Aorta (tissue), 5 donors: ENCODE measurements at regions of chr18 and their contacts with region 1.

Region 1: GRCh38 chr18:59402432-59403090 is 43.5 kb upstream of the LMAN1 start:
- DNase-seq: peak; percentile 74 to 83
- ATAC-seq: peak; percentile 79
- H3K4me3 ChIP-seq: no peak overlapping the region
- H3K27ac ChIP-seq: no peak overlapping the region
- H3K4me1 ChIP-seq: no peaks in the 10 kb centered on the region
- H3K27me3 ChIP-seq: no peaks in the 10 kb centered on the region

Region 2: DNA sequence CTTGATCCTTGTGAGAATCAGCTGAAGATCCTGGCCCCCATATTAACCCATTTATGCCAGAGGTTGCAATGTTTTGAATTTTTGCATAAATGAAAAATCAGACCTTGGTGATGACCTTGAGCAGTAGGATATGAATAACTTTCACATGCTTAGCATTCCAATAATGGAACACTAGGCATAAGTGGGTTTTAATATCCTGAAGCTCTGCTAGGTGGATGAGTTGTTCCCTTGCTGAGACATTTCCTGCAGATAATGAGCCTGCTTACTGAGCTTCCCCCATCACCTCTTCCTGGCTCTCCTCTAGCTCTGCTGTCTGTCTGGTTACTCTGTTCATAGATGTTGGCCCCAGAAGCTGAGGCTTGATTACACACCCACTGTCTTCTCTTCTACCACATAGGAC is 288.4 kb before region 1 on chr18:
- intact Hi-C with region 1: no loop called
- DNase-seq: no peak
- ATAC-seq: no peak
- H3K4me3 ChIP-seq: no peak overlapping the region
- H3K27ac ChIP-seq: no peak overlapping the region
- H3K4me1 ChIP-seq: no peaks in the 10 kb centered on the region
- H3K27me3 ChIP-seq: no peaks in the 10 kb centered on the region

Region 3: GRCh38 chr18:59249205-59249774 is 153.3 kb before region 1 on chr18:
- intact Hi-C with region 1: loop called (anchors 2 to 5 kb)
- DNase-seq: no peak
- ATAC-seq: peak; percentile 50
- H3K4me3 ChIP-seq: no peak overlapping the region
- H3K27ac ChIP-seq: no peak overlapping the region
- H3K4me1 ChIP-seq: no peaks in the 10 kb centered on the region
- H3K27me3 ChIP-seq: no peaks in the 10 kb centered on the region

Region 4: DNA sequence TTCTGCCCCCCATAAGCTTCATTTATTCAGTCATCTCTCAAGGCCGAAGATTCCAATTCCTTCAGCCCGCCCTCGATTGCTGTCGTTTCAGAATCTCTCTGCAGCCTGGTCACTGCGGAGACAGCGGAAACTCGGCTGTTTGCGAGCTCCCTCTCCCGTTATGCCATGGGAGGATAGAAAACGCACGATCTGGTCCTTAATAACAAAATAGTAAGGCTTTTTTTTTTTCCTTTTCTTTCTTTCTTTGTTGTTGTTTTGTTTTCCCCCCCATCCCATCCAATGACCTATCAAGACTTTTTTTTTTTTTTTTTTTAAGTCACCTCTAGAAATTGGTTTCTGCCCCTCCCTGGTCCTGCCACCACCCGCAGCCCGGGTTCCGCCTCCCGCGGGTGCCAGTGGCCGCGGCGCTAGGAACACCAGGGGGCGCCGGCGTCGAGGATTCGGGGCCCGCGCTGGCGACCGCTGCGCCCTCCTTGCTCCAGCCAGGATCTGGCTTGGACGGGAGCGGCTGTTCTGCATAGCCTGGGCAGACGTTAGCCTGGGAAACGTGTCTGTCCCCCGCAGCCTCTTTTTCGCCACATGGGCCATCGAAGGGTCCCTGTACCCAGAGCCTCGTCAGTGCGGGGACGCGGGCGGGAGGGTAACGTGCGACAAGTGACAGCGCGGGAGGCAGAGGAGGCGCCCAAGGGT is 94.2 kb before region 1 on chr18:
- intact Hi-C with region 1: loop called (anchors 2 to 5 kb)
- DNase-seq: peak; percentile 83 to 92
- ATAC-seq: peak; percentile 91
- H3K4me3 ChIP-seq: no peak overlapping the region
- H3K27ac ChIP-seq: no peak overlapping the region
- H3K4me1 ChIP-seq: peaks cover 0 to 2% of the 10 kb centered on the region in 2 donors
- H3K27me3 ChIP-seq: no peaks in the 10 kb centered on the region